ENCODE measurements at regions of chr12 and their contacts with region 1.

Region 1: DNA sequence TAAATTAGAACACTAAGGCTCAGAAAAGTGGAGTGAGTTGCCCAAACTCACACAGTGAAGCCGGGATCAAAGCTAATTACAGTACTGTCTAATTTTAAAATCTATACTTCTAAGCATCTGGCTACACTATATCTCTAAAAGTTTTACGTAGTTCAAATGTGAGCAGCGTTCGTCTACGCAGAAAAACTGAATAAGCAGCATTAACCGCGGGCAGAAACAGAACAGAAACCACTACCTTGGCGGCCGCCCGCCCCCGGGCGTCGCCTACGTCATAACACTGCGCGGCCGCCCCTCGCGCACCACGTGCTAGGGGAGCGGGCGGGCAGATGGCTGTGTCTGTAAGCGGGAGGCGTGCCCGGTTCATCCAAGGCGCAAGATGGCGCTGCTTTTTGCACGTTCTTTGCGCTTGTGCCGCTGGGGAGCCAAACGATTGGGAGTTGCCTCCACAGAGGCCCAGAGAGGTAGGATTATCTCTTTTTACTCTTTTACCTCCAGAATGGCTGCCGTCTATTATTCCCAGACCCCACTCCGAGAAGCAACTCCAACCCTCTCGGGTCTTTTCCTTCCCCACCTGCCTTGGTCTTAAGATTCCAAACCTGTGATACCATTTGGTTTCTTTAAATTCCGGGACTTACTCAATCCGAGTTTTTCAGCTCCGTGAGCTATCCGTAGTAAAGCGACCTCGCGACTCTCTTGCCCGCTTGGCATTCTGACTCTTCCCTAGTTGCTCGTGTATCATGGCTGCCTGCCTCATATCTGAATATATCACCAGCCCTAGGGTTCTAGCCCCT is at the start of gene SPRYD4:
- DNase-seq: peak; percentile 89 to 97 (median 93)
- ATAC-seq: peak; percentile 90
- H3K4me3 ChIP-seq: peak within 1 kb of the TSS; percentile 72 to 99
- H3K4me3 Mint-ChIP-seq: peak within 1 kb of the TSS; percentile 95
- H3K27ac ChIP-seq: peak within 1 kb of the TSS; percentile 93 to 96
- H3K27ac Mint-ChIP-seq: peak within 1 kb of the TSS; percentile 98
- H3K4me1 ChIP-seq: peaks cover 10% of the 10 kb centered on the region
- H3K4me1 Mint-ChIP-seq: peaks cover 35% of the 10 kb centered on the region
- H3K27me3 ChIP-seq: no peaks in the 10 kb centered on the region
- H3K27me3 Mint-ChIP-seq: no peaks in the 10 kb centered on the region
- CTCF ChIP-seq: no peak
- total RNA-seq, gene SPRYD4: 6.8 to 6.9 TPM

Region 2: GRCh38 chr12:55715833-55716581 is 752.4 kb before region 1 on chr12 and contains the start of gene BLOC1S1:
- CTCF ChIA-PET with region 1: no interaction called
- POLR2A ChIA-PET with region 1: no interaction called
- intact Hi-C with region 1: loop called in 1 of 2 experiments (anchors 5 kb)
- DNase-seq: peak; percentile 80 to 96 (median 92)
- ATAC-seq: peak; percentile 96
- H3K4me3 ChIP-seq: peak within 1 kb of the TSS; percentile 84 to 90
- H3K4me3 Mint-ChIP-seq: peak within 1 kb of the TSS; percentile 94
- H3K27ac ChIP-seq: peak within 1 kb of the TSS; percentile 67 to 93
- H3K27ac Mint-ChIP-seq: peak within 1 kb of the TSS; percentile 90
- H3K4me1 ChIP-seq: peaks cover 23% of the 10 kb centered on the region
- H3K4me1 Mint-ChIP-seq: peaks cover 36% of the 10 kb centered on the region
- H3K27me3 ChIP-seq: no peaks in the 10 kb centered on the region
- H3K27me3 Mint-ChIP-seq: no peaks in the 10 kb centered on the region
- CTCF ChIP-seq: no peak
- total RNA-seq, gene BLOC1S1: 29.4 to 29.6 TPM

Region 3: GRCh38 chr12:56258057-56258819 is 210.2 kb before region 1 on chr12 and contains the start of gene ANKRD52:
- CTCF ChIA-PET with region 1: interaction called, 7 read pairs
- POLR2A ChIA-PET with region 1: interaction called, 3 read pairs
- intact Hi-C with region 1: loop called in 1 of 2 experiments (anchors 2 kb)
- DNase-seq: peak; percentile 61 to 92 (median 77)
- ATAC-seq: peak; percentile 95
- H3K4me3 ChIP-seq: peak within 1 kb of the TSS; percentile 79 to 99
- H3K4me3 Mint-ChIP-seq: peak within 1 kb of the TSS; percentile 94
- H3K27ac ChIP-seq: peak within 1 kb of the TSS; percentile 77
- H3K27ac Mint-ChIP-seq: peak within 1 kb of the TSS; percentile 88
- H3K4me1 ChIP-seq: peaks cover 21% of the 10 kb centered on the region
- H3K4me1 Mint-ChIP-seq: peaks cover 21% of the 10 kb centered on the region
- H3K27me3 ChIP-seq: no peaks in the 10 kb centered on the region
- H3K27me3 Mint-ChIP-seq: no peaks in the 10 kb centered on the region
- CTCF ChIP-seq: peak; percentile 64
- total RNA-seq, gene ANKRD52: 27.7 to 29.9 TPM

Region 4: DNA sequence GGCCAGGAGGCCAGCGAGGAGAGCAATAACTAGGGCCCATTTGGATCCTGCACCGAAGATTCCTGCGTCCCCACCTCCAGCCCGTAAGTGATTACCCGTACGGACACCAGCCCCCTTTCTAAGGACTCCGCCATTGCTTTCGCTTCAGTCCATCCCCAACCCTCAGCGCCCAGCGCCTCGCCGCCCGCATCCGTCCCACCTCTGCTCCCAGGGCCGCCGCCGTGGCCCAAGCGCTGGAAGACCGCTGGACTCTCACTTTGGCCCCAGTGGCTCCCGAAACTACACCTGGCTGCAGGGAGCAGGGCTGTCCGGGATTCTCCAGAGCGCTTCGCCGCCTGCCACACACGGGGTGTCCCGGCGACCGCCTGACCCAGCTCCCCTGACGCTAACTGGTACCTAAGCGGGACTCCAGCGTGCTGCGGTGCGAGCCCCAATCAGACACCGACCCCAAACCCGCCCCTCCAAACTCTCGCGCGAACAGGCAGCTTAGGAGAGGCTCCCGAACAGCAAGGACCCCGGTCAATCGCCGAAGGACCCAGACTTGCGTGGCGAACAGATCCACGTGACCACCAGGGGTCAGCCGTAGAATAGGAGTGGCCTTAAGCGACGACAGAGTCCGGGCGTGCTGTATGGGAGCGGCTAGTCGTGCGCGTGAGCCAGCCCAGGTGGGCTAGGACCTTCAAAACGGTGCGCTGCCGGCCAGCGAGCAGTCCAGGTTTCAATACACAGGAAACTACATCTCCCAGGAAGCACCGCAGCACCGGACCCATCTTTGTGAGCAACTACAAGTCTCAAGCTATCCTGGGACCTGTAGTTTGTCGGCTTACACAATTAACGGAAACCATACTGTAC is 152.6 kb before region 1 on chr12 and contains the start of gene CNPY2:
- CTCF ChIA-PET with region 1: interaction called, 12 read pairs
- POLR2A ChIA-PET with region 1: interaction called, 9 read pairs
- intact Hi-C with region 1: loop called (anchors 1 kb)
- DNase-seq: peak; percentile 89 to 97 (median 95)
- ATAC-seq: peak; percentile 92
- H3K4me3 ChIP-seq: peak within 1 kb of the TSS; percentile 86 to 99
- H3K4me3 Mint-ChIP-seq: peak within 1 kb of the TSS; percentile 99
- H3K27ac ChIP-seq: peak within 1 kb of the TSS; percentile 70 to 98
- H3K27ac Mint-ChIP-seq: peak within 1 kb of the TSS; percentile 98
- H3K4me1 ChIP-seq: peaks cover 10% of the 10 kb centered on the region
- H3K4me1 Mint-ChIP-seq: peaks cover 16% of the 10 kb centered on the region
- H3K27me3 ChIP-seq: no peaks in the 10 kb centered on the region
- H3K27me3 Mint-ChIP-seq: no peaks in the 10 kb centered on the region
- CTCF ChIP-seq: no peak
- total RNA-seq, gene CNPY2: 23.5 to 33.9 TPM

Region 5: GRCh38 chr12:56359851-56360767 is 108.3 kb before region 1 on chr12 and contains the start of gene STAT2:
- CTCF ChIA-PET with region 1: interaction called, 22 read pairs
- POLR2A ChIA-PET with region 1: interaction called, 8 read pairs
- intact Hi-C with region 1: loop called (anchors 1 kb)
- DNase-seq: peak; percentile 98 to 100 (median 99)
- ATAC-seq: peak; percentile 93
- H3K4me3 ChIP-seq: peak within 1 kb of the TSS; percentile 78 to 81
- H3K4me3 Mint-ChIP-seq: peak within 1 kb of the TSS; percentile 95
- H3K27ac ChIP-seq: peak within 1 kb of the TSS; percentile 76 to 78
- H3K27ac Mint-ChIP-seq: peak within 1 kb of the TSS; percentile 95
- H3K4me1 ChIP-seq: peaks cover 23% of the 10 kb centered on the region
- H3K4me1 Mint-ChIP-seq: peaks cover 34% of the 10 kb centered on the region
- H3K27me3 ChIP-seq: no peaks in the 10 kb centered on the region
- H3K27me3 Mint-ChIP-seq: no peaks in the 10 kb centered on the region
- CTCF ChIP-seq: no peak
- total RNA-seq, gene STAT2: 71.8 to 81.9 TPM

Region 6: DNA sequence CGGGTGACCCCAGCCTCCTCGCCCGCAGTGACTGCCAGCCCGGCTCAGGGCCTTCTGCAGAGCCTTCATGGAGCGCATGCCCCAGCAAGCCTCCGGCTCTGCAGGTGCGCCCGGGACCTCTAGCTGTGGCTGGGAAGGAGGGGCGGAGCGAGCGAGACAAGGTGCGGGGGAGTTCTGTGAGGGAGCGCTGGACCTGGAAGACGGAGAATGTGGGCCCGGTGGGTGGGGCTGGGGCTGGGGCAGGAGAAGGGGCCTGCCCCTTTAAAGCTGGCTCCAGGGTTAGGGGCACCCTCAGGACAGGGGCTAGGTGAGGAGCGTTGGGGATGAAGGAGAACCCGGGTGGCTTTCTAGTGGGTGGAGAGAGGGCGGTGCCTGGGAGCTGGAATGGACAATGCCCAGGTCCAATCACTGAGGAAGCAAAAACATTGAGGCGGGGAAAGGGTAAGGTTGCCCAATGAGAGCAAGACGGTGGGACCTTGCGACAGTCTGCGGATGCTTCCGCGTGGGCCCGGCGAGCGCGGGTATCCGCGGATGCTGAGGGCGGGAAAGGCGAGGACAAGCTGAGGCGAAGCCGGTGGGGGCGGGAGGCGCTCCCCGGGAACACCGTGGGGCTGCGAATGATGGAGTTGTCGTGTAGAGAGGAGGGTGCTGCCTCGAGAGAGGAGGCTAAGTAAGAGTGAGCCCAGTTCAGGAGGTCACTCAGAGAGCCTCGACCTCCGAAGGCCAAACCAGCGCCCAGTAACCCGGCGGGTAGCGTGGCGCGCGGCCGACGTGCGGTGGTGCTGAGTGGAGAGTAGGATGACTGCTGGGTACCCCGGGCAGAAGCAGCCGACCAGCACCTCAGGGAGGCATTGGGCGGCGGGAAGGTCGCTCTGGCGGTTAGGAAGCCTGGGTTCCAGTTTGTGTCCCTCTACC is 19.9 kb after region 1 on chr12 and contains the start of gene GLS2:
- CTCF ChIA-PET with region 1: no interaction called
- POLR2A ChIA-PET with region 1: interaction called, 3 read pairs
- intact Hi-C with region 1: loop called in 1 of 2 experiments (anchors 1 kb)
- DNase-seq: peak; percentile 48 to 89 (median 74)
- ATAC-seq: peak; percentile 97
- H3K4me3 ChIP-seq: peak within 1 kb of the TSS; percentile 63 to 64
- H3K4me3 Mint-ChIP-seq: peak within 1 kb of the TSS; percentile 93
- H3K27ac ChIP-seq: no peak within 1 kb of the TSS
- H3K27ac Mint-ChIP-seq: peak within 1 kb of the TSS; percentile 77
- H3K4me1 ChIP-seq: peaks cover 12% of the 10 kb centered on the region
- H3K4me1 Mint-ChIP-seq: peaks cover 18% of the 10 kb centered on the region
- H3K27me3 ChIP-seq: no peaks in the 10 kb centered on the region
- H3K27me3 Mint-ChIP-seq: peaks cover 17% of the 10 kb centered on the region
- CTCF ChIP-seq: no peak
- total RNA-seq, gene GLS2: 1.5 to 1.7 TPM

Region 7: GRCh38 chr12:56521590-56522371 is 53.4 kb after region 1 on chr12 and contains the start of gene RBMS2:
- CTCF ChIA-PET with region 1: no interaction called
- POLR2A ChIA-PET with region 1: no interaction called
- intact Hi-C with region 1: no loop called
- DNase-seq: peak; percentile 6 to 85 (median 47)
- ATAC-seq: peak; percentile 95
- H3K4me3 ChIP-seq: peak within 1 kb of the TSS; percentile 43 to 50
- H3K4me3 Mint-ChIP-seq: peak within 1 kb of the TSS; percentile 93
- H3K27ac ChIP-seq: peak within 1 kb of the TSS; percentile 46 to 61
- H3K27ac Mint-ChIP-seq: peak within 1 kb of the TSS; percentile 92
- H3K4me1 ChIP-seq: peaks cover 23% of the 10 kb centered on the region
- H3K4me1 Mint-ChIP-seq: peaks cover 30% of the 10 kb centered on the region
- H3K27me3 ChIP-seq: no peaks in the 10 kb centered on the region
- H3K27me3 Mint-ChIP-seq: no peaks in the 10 kb centered on the region
- CTCF ChIP-seq: no peak
- total RNA-seq, gene RBMS2: 8.3 to 9.9 TPM

Measured in CD8-positive, alpha-beta T cell (primary cell).